ENCODE measurements at regions of chr12 and their contacts with region 1.

Region 1: DNA sequence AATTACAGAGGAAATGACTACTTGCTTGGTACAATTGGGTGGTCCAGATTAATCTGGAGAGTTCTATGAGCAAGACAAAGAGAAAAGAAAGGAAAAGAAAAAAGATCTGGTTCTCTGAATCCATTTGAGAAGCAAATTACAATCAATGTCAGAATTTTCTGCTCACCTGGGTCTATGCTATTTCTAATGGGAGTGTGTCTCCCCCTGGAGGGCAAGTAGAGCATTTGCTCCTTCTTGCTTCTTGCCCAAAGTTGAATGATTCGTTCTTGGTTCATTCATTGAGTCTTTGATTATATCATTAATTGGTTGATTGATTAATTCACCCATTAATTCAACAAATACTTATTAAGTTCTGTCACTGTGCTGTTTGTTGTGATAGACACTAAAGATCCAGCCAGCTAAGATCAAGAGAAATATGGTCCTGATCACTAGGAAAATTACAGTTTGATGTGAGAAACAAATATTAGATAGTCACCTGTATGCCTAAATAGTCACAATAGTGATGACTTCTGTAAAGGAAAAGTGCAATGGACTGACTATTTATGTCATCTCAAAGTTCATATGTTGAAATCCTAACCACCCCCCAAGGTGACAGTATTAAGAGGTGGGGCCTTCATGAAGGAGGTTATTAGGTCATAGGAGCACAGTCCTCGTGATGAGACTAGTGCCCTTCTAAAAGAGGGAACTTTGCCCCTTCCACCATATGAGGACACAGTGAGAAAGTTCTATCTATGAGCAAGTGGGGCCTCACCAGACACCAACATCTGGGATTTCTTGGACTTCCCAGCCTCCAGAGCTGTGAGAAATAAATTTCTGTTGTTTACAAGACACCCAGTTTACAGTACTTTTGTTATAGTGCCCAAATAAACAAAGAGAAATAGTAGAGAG is 8.0 kb upstream of the ASB8 start:
- DNase-seq: peak in 7 of 9 donors; percentile 54 to 77 (median 70)
- ATAC-seq: peak; percentile 87
- H3K4me3 ChIP-seq: no peak overlapping the region
- H3K4me3 Mint-ChIP-seq: no peak overlapping the region
- H3K27ac ChIP-seq: no peak overlapping the region
- H3K27ac Mint-ChIP-seq: no peak overlapping the region
- H3K4me1 ChIP-seq: no peaks in the 10 kb centered on the region
- H3K4me1 Mint-ChIP-seq: peaks cover 2 to 16% (median 14%) of the 10 kb centered on the region in 7 donors
- H3K27me3 ChIP-seq: no peaks in the 10 kb centered on the region
- H3K27me3 Mint-ChIP-seq: peaks cover 0 to 33% (median 12%) of the 10 kb centered on the region in 5 donors

Region 2: DNA sequence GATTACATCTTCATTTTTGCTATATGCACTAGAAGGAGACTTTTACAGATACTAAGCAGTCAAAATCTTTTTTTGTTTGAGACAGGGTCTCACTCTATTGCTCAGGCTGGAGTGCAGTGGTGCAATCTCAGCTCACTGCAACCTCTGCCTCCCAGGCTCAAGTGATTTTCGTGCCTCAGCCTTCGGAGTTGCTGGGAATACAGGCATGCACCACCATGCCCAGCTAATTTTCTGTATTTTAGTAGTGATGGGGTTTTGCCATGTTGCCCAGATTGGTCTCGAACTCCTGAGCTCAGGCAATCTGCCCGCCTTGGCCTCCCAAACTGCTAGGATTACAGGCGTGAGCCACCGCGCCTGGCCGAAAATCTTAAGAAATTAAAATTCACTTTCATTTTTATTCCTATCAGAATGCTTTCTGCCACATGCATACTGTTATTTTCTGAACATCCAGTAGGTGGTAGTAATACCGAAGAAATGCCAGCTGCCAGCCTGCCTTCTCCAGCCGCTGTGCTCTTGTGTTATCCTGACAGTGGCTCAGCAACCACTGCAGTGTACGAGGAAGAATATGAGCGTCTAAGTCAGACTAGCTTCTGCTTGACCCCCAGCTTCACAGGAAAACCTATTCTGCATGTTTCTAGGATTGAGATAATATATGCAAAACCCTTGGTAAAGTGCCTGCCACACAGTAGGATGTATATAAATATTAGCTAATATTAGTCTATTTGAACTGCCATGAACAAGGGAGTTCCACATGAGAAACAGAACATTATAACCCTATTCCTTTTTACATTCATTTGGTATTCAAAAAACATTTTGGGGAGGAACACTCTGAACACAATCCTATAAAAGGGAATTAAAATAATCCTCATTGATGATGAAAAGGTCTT is 513.7 kb before region 1 on chr12:
- CTCF ChIA-PET with region 1: no interaction called
- POLR2A ChIA-PET with region 1: no interaction called
- intact Hi-C with region 1: loop called in 1 of 2 experiments (anchors 5 kb)
- DNase-seq: peak in 8 of 9 donors; percentile 39 to 69 (median 56)
- ATAC-seq: peak; percentile 97
- H3K4me3 ChIP-seq: peak overlapping the region; percentile 38
- H3K4me3 Mint-ChIP-seq: peak overlapping the region; percentile 21 to 75 (median 44)
- H3K27ac ChIP-seq: peak overlapping the region; percentile 9
- H3K27ac Mint-ChIP-seq: peak overlapping the region in 8 of 9 donors; percentile 11 to 94 (median 64)
- H3K4me1 ChIP-seq: peaks cover 5 to 6% of the 10 kb centered on the region in 2 donors
- H3K4me1 Mint-ChIP-seq: peaks cover 8 to 21% (median 16%) of the 10 kb centered on the region in 7 donors
- H3K27me3 ChIP-seq: no peaks in the 10 kb centered on the region
- H3K27me3 Mint-ChIP-seq: no peaks in the 10 kb centered on the region

Region 3: DNA sequence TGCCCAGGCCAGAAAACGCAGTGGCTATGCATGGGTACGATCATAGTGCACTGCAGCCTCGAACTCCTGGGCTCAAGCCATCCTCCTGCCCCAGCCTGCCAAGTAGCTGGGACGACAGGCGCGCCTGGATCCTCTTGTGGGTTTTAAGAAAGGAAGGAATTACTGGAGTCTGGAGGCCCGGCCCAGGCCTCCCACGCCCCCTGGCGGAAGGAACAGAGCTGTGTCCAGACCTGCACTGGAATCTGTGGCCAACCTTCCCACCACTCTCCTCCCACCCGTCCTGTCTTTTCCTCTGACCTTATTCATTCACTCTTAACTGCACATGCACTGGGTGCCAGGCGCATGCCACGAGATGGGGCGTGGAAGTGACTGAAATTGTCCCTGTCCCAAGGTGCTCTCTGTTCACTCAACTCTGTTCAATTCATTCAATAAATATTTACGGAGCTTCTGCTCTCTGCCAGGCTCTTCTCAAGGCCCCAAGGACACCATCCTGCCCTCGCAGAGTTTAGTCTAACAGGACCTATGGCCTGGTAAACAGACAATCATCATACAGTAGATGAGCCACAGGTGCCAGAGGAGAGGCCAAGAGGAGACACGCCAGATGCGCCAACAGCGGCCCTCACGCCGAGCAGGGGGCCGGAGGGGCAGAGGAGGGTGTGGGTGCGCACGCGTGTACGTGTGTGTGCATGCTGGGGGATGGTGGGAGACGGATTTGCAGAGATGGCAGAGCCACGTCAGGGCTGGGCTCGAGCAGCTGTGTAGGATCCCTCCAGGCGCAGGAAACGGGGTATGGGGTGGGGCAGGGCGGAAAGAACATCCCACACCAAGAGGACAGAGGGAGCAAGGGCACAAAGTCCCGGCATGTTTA is 215.7 kb before region 1 on chr12:
- CTCF ChIA-PET with region 1: interaction called, 3 read pairs
- POLR2A ChIA-PET with region 1: no interaction called
- intact Hi-C with region 1: loop called in 1 of 2 experiments (anchors 5 kb)
- DNase-seq: peak in 7 of 9 donors; percentile 22 to 67 (median 45)
- ATAC-seq: peak; percentile 72
- H3K4me3 ChIP-seq: no peak overlapping the region
- H3K4me3 Mint-ChIP-seq: no peak overlapping the region
- H3K27ac ChIP-seq: no peak overlapping the region
- H3K27ac Mint-ChIP-seq: peak overlapping the region in 1 of 9 donors; percentile 38
- H3K4me1 ChIP-seq: no peaks in the 10 kb centered on the region
- H3K4me1 Mint-ChIP-seq: peaks cover 0 to 18% (median 0%) of the 10 kb centered on the region in 7 donors
- H3K27me3 ChIP-seq: no peaks in the 10 kb centered on the region
- H3K27me3 Mint-ChIP-seq: peaks cover 4 to 13% (median 5%) of the 10 kb centered on the region in 5 donors

Region 4: GRCh38 chr12:48084066-48084465 is 81.3 kb before region 1 on chr12:
- CTCF ChIA-PET with region 1: interaction called, 8 read pairs
- POLR2A ChIA-PET with region 1: interaction called, 3 read pairs
- intact Hi-C with region 1: loop called in 1 of 2 experiments (anchors 1 kb)
- DNase-seq: no peak
- ATAC-seq: no peak
- H3K4me3 ChIP-seq: no peak overlapping the region
- H3K4me3 Mint-ChIP-seq: no peak overlapping the region
- H3K27ac ChIP-seq: no peak overlapping the region
- H3K27ac Mint-ChIP-seq: no peak overlapping the region
- H3K4me1 ChIP-seq: no peaks in the 10 kb centered on the region
- H3K4me1 Mint-ChIP-seq: peaks cover 0 to 2% (median 0%) of the 10 kb centered on the region in 7 donors
- H3K27me3 ChIP-seq: no peaks in the 10 kb centered on the region
- H3K27me3 Mint-ChIP-seq: no peaks in the 10 kb centered on the region

Region 5: GRCh38 chr12:48131517-48131916 is 33.8 kb before region 1 on chr12:
- CTCF ChIA-PET with region 1: no interaction called
- POLR2A ChIA-PET with region 1: no interaction called
- intact Hi-C with region 1: no loop called
- DNase-seq: no peak
- ATAC-seq: no peak
- H3K4me3 ChIP-seq: no peak overlapping the region
- H3K4me3 Mint-ChIP-seq: no peak overlapping the region
- H3K27ac ChIP-seq: no peak overlapping the region
- H3K27ac Mint-ChIP-seq: no peak overlapping the region
- H3K4me1 ChIP-seq: no peaks in the 10 kb centered on the region
- H3K4me1 Mint-ChIP-seq: no peaks in the 10 kb centered on the region
- H3K27me3 ChIP-seq: no peaks in the 10 kb centered on the region
- H3K27me3 Mint-ChIP-seq: no peaks in the 10 kb centered on the region

Region 6: GRCh38 chr12:48216785-48217184 is 51.4 kb after region 1 on chr12:
- CTCF ChIA-PET with region 1: no interaction called
- POLR2A ChIA-PET with region 1: no interaction called
- intact Hi-C with region 1: no loop called
- DNase-seq: no peak
- ATAC-seq: peak; percentile 10
- H3K4me3 ChIP-seq: no peak overlapping the region
- H3K4me3 Mint-ChIP-seq: no peak overlapping the region
- H3K27ac ChIP-seq: no peak overlapping the region
- H3K27ac Mint-ChIP-seq: no peak overlapping the region
- H3K4me1 ChIP-seq: no peaks in the 10 kb centered on the region
- H3K4me1 Mint-ChIP-seq: peaks cover 5 to 22% (median 13%) of the 10 kb centered on the region in 7 donors
- H3K27me3 ChIP-seq: no peaks in the 10 kb centered on the region
- H3K27me3 Mint-ChIP-seq: peaks cover 3 to 25% (median 18%) of the 10 kb centered on the region in 5 donors

Region 7: DNA sequence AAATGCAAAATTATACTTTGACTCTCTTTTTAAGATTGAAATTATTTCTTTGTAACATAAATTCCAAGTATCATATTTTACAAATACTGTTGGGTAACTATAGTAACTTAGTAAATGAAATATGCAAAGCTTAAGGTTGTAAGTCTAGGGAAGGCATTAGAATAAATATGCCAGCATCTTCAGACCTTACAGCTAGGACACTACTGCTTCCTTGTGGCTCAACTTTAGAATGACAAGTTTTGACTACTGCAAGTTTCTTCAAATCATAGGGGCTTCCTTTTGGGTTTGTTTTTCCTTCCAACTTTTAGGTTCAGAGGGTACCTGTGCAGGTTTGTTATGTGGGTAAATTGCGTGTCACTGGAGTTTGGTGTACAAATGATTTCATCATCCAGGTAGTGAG is 289.3 kb after region 1 on chr12:
- CTCF ChIA-PET with region 1: no interaction called
- POLR2A ChIA-PET with region 1: no interaction called
- intact Hi-C with region 1: loop called in 1 of 2 experiments (anchors 1 kb)
- DNase-seq: peak in 7 of 9 donors; percentile 13 to 57 (median 32)
- ATAC-seq: peak; percentile 73
- H3K4me3 ChIP-seq: no peak overlapping the region
- H3K4me3 Mint-ChIP-seq: no peak overlapping the region
- H3K27ac ChIP-seq: no peak overlapping the region
- H3K27ac Mint-ChIP-seq: no peak overlapping the region
- H3K4me1 ChIP-seq: no peaks in the 10 kb centered on the region
- H3K4me1 Mint-ChIP-seq: no peaks in the 10 kb centered on the region
- H3K27me3 ChIP-seq: no peaks in the 10 kb centered on the region
- H3K27me3 Mint-ChIP-seq: peaks cover 0 to 18% (median 8%) of the 10 kb centered on the region in 5 donors

Region 8: GRCh38 chr12:48572326-48572725 is 407.0 kb after region 1 on chr12:
- CTCF ChIA-PET with region 1: no interaction called
- POLR2A ChIA-PET with region 1: no interaction called
- intact Hi-C with region 1: no loop called
- DNase-seq: no peak
- ATAC-seq: no peak
- H3K4me3 ChIP-seq: no peak overlapping the region
- H3K4me3 Mint-ChIP-seq: no peak overlapping the region
- H3K27ac ChIP-seq: no peak overlapping the region
- H3K27ac Mint-ChIP-seq: no peak overlapping the region
- H3K4me1 ChIP-seq: no peaks in the 10 kb centered on the region
- H3K4me1 Mint-ChIP-seq: peaks cover 0 to 6% (median 0%) of the 10 kb centered on the region in 7 donors
- H3K27me3 ChIP-seq: no peaks in the 10 kb centered on the region
- H3K27me3 Mint-ChIP-seq: peaks cover 10 to 20% (median 17%) of the 10 kb centered on the region in 5 donors

Measured in naive thymus-derived CD4-positive, alpha-beta T cell (primary cell).